ENCODE measurements at regions of chr9 and their contacts with region 1.

Region 1: DNA sequence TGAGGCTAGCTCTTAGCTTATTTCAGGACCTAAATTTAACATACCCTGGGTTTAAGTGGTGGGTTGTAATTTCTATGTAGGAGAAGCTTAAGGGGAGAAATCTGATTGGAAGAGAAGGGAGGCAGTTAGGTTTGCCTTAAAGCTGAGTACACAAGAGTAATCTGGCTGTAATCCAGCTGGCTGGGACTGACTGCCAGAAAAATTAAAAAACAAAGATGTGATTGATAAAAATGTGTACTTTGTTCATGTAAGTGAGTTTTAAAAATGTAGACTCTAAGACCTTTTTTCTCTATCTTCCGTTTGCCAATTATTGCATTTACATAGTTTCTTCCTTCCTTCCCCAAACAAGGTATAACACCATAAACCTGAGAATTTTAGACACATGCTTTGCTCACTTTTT is 17.5 kb upstream of the MSMP start:
- DNase-seq: no peak
- H3K4me3 ChIP-seq: no peak overlapping the region
- H3K4me3 Mint-ChIP-seq: no peak overlapping the region
- H3K27ac ChIP-seq: no peak overlapping the region
- H3K27ac Mint-ChIP-seq: no peak overlapping the region
- H3K4me1 ChIP-seq: peaks cover 3% of the 10 kb centered on the region
- H3K4me1 Mint-ChIP-seq: peaks cover 0 to 10% (median 6%) of the 10 kb centered on the region in 4 donors
- H3K27me3 ChIP-seq: no peaks in the 10 kb centered on the region
- H3K27me3 Mint-ChIP-seq: no peaks in the 10 kb centered on the region

Region 2: DNA sequence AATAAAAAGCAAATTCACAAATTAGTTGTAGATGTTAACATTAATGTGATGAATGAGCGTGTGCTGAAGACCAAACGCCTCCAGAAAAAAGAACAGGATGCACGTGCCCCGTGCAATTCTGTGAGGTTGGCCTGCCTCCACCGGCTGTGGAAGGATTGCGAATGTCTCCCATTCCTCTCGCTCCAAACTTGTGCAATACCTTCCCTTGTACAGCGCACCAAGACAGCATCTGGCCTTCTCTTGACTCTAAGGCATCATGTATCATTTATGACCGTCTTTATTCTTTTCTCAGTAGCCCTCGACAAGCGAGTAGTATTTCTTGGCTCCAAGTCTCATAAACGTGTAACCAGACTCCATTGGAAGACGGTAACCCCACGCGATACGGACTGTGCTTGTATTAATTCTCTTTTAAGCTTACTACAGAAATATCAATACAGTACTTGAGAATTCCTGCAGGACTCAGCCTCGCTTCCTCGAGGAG is 168.0 kb before region 1 on chr9:
- CTCF ChIA-PET with region 1: no interaction called
- POLR2A ChIA-PET with region 1: no interaction called
- intact Hi-C with region 1: no loop called
- DNase-seq: peak in 1 of 5 donors; percentile 36
- H3K4me3 ChIP-seq: peak overlapping the region in 1 of 2 donors; percentile 75
- H3K4me3 Mint-ChIP-seq: peak overlapping the region; percentile 95 to 100 (median 98)
- H3K27ac ChIP-seq: peak overlapping the region; percentile 55
- H3K27ac Mint-ChIP-seq: peak overlapping the region; percentile 96 to 100 (median 99)
- H3K4me1 ChIP-seq: peaks cover 37% of the 10 kb centered on the region
- H3K4me1 Mint-ChIP-seq: peaks cover 25 to 47% (median 32%) of the 10 kb centered on the region in 4 donors
- H3K27me3 ChIP-seq: no peaks in the 10 kb centered on the region
- H3K27me3 Mint-ChIP-seq: no peaks in the 10 kb centered on the region

Region 3: DNA sequence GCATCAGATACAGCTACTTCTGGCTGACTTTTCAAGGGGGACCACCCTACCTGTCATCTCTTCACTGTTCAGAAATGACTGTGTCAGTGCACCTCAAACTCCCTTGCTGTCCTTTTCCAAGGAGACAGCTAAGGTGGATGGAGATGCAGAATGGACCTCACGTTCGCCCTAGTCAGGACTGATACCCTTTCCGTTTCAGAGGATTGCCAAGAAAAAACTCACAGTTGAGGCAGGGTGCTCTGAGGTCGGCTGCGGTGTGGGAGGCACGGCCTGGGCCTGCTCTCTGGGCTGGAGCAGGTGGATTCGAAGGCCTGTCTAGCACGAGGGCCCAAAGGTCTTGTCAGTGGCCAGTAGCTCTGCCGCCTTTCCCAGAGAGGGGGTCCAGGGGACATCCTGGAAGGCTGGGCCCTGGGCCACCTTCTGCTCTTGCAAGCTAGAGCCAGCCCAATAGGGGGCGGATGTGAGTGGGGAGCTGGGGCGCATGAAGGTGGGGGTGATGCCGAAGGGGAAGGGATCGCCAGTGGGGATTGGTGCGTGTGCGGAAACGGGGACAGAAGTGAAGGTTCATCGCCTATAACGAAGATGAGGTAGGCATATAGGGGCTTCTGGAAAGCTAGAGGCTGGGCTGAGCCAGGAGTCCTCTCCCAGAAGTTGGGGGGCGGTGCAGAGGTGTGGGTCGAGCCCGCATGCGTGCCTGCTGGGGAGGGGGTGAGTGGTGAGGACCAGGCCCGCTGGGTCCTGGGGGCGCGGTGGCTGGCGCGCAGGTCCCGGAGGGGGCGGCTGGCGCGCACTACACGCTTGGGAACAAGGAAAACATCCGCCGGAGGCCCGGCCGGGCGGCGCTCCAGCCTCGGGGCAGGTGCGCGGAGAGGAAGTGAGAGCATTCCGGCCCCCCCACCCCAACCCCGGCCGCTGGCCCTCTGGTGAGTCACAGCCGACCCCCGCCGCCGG is 15.0 kb before region 1 on chr9:
- CTCF ChIA-PET with region 1: interaction called, 14 read pairs
- POLR2A ChIA-PET with region 1: no interaction called
- intact Hi-C with region 1: no loop called
- DNase-seq: peak; percentile 68 to 80 (median 71)
- H3K4me3 ChIP-seq: peak overlapping the region; percentile 62 to 90
- H3K4me3 Mint-ChIP-seq: peak overlapping the region; percentile 97 to 100 (median 98)
- H3K27ac ChIP-seq: peak overlapping the region; percentile 70
- H3K27ac Mint-ChIP-seq: peak overlapping the region; percentile 81 to 99 (median 98)
- H3K4me1 ChIP-seq: peaks cover 22% of the 10 kb centered on the region
- H3K4me1 Mint-ChIP-seq: peaks cover 24 to 67% (median 49%) of the 10 kb centered on the region in 4 donors
- H3K27me3 ChIP-seq: no peaks in the 10 kb centered on the region
- H3K27me3 Mint-ChIP-seq: no peaks in the 10 kb centered on the region

Region 4: DNA sequence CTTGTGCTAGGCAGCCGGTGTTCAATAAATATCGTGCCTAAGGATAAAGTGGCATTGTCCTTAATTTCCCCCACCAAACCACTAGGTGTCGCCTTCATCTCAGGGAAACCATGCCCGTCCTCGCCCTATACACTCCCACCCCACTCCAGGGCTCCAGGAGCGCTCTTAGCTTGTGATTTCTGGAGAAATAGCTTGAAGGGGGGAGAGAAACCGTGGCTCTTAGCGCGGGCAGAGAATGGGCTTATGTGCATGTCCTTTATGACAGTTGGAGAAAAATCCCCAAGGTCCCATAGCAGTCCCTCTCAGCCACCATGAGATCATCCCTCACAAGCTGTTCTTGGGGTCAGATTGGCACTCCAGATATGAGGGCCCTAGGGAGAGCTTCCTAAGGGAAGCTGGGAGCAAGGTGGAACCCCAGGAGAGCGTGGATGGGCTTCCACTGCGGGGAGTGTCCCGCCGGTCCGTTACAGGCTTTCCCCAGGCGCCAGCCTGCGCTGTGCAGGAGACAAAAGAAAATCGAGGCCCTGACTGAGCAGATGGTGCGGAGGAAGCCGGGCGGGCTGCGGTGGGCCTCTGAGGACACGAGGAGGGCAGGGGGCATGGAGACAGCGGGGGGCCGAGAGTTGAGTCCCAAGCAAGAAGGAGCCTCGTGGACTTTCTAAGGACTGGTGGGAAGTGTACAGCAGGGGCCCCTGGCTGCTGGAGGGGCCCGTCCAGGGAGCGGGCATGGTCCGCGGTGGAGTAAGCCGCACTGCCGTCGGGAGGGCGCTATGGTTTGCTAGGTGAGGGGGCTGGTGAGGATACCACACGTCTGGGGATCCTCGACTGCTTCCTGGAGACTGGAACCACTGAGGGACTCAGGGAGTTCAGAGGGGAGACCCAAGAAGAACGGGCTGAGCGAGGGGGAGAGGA is 19.1 kb after region 1 on chr9:
- CTCF ChIA-PET with region 1: interaction called, 25 read pairs
- POLR2A ChIA-PET with region 1: no interaction called
- intact Hi-C with region 1: no loop called
- DNase-seq: peak; percentile 58 to 69 (median 64)
- H3K4me3 ChIP-seq: no peak overlapping the region
- H3K4me3 Mint-ChIP-seq: no peak overlapping the region
- H3K27ac ChIP-seq: no peak overlapping the region
- H3K27ac Mint-ChIP-seq: peak overlapping the region in 2 of 7 donors; percentile 27 to 47
- H3K4me1 ChIP-seq: no peaks in the 10 kb centered on the region
- H3K4me1 Mint-ChIP-seq: peaks cover 7 to 12% (median 9%) of the 10 kb centered on the region in 4 donors
- H3K27me3 ChIP-seq: no peaks in the 10 kb centered on the region
- H3K27me3 Mint-ChIP-seq: no peaks in the 10 kb centered on the region